Endothelial cell of umbilical vein (primary cell): ENCODE measurements at regions of chr4 and their contacts with region 1.

Region 1: DNA sequence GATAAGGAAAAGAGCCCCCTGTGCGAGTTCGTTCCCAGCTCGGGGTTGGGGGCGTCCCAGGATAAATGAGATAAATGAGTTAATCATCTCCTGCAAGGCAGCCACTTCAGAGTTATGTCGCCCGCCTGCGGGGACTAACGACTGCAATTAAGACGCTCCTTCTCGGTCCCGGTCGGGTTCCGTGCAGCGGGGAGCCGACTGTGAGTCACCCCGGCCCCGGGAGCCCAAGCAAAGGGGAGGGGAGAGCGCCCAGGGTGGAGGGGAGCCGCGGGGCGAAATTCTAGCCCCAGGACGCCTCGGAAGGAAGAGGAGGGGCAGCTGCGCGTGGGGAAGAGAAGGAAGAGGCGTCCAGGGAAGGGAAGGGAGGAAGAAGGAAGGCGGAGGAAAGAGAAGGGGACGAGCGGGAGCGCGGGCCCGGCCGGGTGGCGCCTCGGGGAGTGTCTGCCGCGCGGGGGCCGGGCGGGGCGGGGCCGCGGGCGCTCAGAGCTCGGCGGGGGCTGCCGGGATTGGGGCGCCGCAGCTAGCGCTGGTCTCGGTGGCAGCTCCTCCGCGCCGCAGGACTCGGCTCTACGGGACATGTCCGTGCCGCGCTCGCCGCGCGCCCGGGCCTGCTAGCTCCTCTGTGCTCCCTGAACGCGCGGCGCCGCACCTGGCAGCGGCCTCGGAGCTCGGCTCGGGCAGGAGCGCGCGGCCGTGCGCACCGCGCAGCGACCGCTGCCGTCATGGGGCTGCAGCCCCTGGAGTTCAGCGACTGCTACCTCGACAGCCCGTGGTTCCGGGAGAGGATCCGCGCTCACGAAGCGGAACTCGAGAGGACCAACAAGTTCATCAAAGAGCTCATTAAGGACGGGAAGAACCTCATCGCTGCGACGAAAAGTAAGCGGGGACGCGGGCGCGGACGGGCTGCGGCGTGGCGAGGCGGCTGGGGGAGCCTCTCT is at the start of gene ARHGAP10:
- DNase-seq: peak; percentile 78
- H3K4me3 ChIP-seq: peak within 1 kb of the TSS; percentile 72 to 81 (median 79)
- H3K27ac ChIP-seq: peak within 1 kb of the TSS; percentile 83
- H3K4me1 ChIP-seq: peaks cover 42% of the 10 kb centered on the region
- H3K27me3 ChIP-seq: no peaks in the 10 kb centered on the region
- CTCF ChIP-seq: no peak
- POLR2A ChIP-seq: peak; percentile 86
- total RNA-seq, gene ARHGAP10: 36.7 and 39.1 TPM in 2 replicates

Region 2: DNA sequence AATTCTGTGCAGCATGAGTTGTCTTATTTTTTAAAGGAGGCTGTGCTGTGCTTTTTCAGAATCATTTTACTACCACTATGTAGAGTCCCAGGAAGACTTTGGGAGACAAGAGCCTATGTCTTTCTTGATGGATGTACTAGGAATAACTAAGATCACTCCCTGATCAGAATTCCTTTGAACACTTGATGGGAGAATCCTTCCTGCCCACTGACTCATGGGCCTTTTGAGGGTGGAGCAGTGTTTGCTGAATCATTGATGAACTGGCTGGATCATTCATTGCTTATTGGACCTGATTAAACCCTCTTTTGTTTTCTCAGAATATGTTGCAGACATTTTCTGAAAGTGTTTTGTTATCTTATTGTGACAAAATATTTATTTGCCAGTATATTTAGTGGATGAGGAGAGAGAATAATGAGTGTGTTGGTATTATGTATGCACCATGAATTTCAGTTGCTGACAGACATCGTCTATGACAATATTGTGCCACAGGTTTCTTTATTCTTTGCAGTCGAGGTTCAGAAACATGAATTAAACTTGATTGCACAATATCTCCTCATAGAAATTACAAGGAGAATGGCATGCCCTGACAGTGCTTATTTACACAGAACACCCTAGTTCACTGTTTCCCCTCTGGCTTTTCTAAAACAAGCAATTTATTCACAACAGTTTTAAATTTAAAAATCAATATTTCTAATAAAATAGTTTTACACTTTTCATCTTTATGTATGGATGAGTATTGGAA is 1056.8 kb before region 1 on chr4:
- CTCF ChIA-PET with region 1: no interaction called
- POLR2A ChIA-PET with region 1: no interaction called
- dilution Hi-C with region 1: no loop called
- intact Hi-C with region 1: no loop called
- DNase-seq: no peak
- H3K4me3 ChIP-seq: no peak overlapping the region
- H3K27ac ChIP-seq: no peak overlapping the region
- H3K4me1 ChIP-seq: no peaks in the 10 kb centered on the region
- H3K27me3 ChIP-seq: no peaks in the 10 kb centered on the region
- CTCF ChIP-seq: no peak
- POLR2A ChIP-seq: no peak

Region 3: GRCh38 chr4:147509386-147509785 is 222.5 kb before region 1 on chr4:
- CTCF ChIA-PET with region 1: no interaction called
- POLR2A ChIA-PET with region 1: no interaction called
- dilution Hi-C with region 1: no loop called
- intact Hi-C with region 1: no loop called
- DNase-seq: no peak
- H3K4me3 ChIP-seq: no peak overlapping the region
- H3K27ac ChIP-seq: no peak overlapping the region
- H3K4me1 ChIP-seq: no peaks in the 10 kb centered on the region
- H3K27me3 ChIP-seq: peaks cover 0 to 6% of the 10 kb centered on the region in 2 experiments
- CTCF ChIP-seq: no peak
- POLR2A ChIP-seq: no peak

Region 4: GRCh38 chr4:147683717-147684700 is 47.8 kb before region 1 on chr4 and contains the start of gene PRMT9:
- CTCF ChIA-PET with region 1: no interaction called
- POLR2A ChIA-PET with region 1: interaction called, 8 read pairs
- dilution Hi-C with region 1: no loop called
- intact Hi-C with region 1: loop called (anchors 2 kb)
- DNase-seq: peak; percentile 93
- H3K4me3 ChIP-seq: peak within 1 kb of the TSS; percentile 47 to 85 (median 80)
- H3K27ac ChIP-seq: peak within 1 kb of the TSS; percentile 78
- H3K4me1 ChIP-seq: peaks cover 15% of the 10 kb centered on the region
- H3K27me3 ChIP-seq: no peaks in the 10 kb centered on the region
- CTCF ChIP-seq: no peak
- POLR2A ChIP-seq: peak; percentile 99
- total RNA-seq, gene PRMT9: 8.2 and 9.0 TPM in 2 replicates

Region 5: GRCh38 chr4:147714575-147715401 is 17.1 kb before region 1 on chr4:
- CTCF ChIA-PET with region 1: interaction called, 12 read pairs
- POLR2A ChIA-PET with region 1: no interaction called
- dilution Hi-C with region 1: no loop called
- intact Hi-C with region 1: loop called (anchors 1 kb)
- DNase-seq: peak; percentile 81
- H3K4me3 ChIP-seq: peak overlapping the region in 1 of 3 experiments; percentile 50
- H3K27ac ChIP-seq: peak overlapping the region; percentile 71
- H3K4me1 ChIP-seq: peaks cover 16% of the 10 kb centered on the region
- H3K27me3 ChIP-seq: no peaks in the 10 kb centered on the region
- CTCF ChIP-seq: no peak
- POLR2A ChIP-seq: no peak

Region 6: GRCh38 chr4:147755561-147756295 is 23.9 kb after region 1 on chr4:
- CTCF ChIA-PET with region 1: interaction called, 3 read pairs
- POLR2A ChIA-PET with region 1: no interaction called
- dilution Hi-C with region 1: no loop called
- intact Hi-C with region 1: loop called (anchors 2 kb)
- DNase-seq: no peak
- H3K4me3 ChIP-seq: no peak overlapping the region
- H3K27ac ChIP-seq: no peak overlapping the region
- H3K4me1 ChIP-seq: peaks cover 11% of the 10 kb centered on the region
- H3K27me3 ChIP-seq: no peaks in the 10 kb centered on the region
- CTCF ChIP-seq: no peak
- POLR2A ChIP-seq: no peak

Region 7: GRCh38 chr4:147831551-147832177 is 99.8 kb after region 1 on chr4:
- CTCF ChIA-PET with region 1: interaction called, 3 read pairs
- POLR2A ChIA-PET with region 1: no interaction called
- dilution Hi-C with region 1: no loop called
- intact Hi-C with region 1: loop called (anchors 1 kb)
- DNase-seq: peak; percentile 88
- H3K4me3 ChIP-seq: peak overlapping the region in 1 of 3 experiments; percentile 37
- H3K27ac ChIP-seq: peak overlapping the region; percentile 99
- H3K4me1 ChIP-seq: peaks cover 30% of the 10 kb centered on the region
- H3K27me3 ChIP-seq: no peaks in the 10 kb centered on the region
- CTCF ChIP-seq: no peak
- POLR2A ChIP-seq: no peak

Region 8: DNA sequence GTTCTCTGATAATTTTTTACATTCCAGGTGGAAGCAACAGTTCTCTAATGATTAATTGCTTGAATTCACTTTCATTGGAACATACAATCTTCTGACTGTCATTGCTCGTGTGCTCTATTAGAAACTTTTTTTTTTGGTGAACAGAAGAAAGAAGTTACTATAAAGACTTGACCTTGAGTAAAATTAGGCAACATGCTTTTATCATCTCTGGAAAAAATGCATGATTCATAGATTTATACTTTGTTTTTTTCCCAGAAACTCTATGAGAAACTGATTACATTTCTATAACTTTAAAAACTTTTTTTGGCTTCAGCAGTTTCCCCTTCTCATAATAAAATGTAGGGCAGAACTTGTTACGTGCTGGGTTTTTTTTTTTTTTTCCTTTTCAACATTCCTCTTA is 167.7 kb after region 1 on chr4:
- CTCF ChIA-PET with region 1: no interaction called
- POLR2A ChIA-PET with region 1: no interaction called
- dilution Hi-C with region 1: no loop called
- intact Hi-C with region 1: no loop called
- DNase-seq: no peak
- H3K4me3 ChIP-seq: no peak overlapping the region
- H3K27ac ChIP-seq: no peak overlapping the region
- H3K4me1 ChIP-seq: no peaks in the 10 kb centered on the region
- H3K27me3 ChIP-seq: no peaks in the 10 kb centered on the region
- CTCF ChIP-seq: no peak
- POLR2A ChIP-seq: no peak